ENCODE measurements at regions of chr13 and their contacts with region 1.

Region 1: DNA sequence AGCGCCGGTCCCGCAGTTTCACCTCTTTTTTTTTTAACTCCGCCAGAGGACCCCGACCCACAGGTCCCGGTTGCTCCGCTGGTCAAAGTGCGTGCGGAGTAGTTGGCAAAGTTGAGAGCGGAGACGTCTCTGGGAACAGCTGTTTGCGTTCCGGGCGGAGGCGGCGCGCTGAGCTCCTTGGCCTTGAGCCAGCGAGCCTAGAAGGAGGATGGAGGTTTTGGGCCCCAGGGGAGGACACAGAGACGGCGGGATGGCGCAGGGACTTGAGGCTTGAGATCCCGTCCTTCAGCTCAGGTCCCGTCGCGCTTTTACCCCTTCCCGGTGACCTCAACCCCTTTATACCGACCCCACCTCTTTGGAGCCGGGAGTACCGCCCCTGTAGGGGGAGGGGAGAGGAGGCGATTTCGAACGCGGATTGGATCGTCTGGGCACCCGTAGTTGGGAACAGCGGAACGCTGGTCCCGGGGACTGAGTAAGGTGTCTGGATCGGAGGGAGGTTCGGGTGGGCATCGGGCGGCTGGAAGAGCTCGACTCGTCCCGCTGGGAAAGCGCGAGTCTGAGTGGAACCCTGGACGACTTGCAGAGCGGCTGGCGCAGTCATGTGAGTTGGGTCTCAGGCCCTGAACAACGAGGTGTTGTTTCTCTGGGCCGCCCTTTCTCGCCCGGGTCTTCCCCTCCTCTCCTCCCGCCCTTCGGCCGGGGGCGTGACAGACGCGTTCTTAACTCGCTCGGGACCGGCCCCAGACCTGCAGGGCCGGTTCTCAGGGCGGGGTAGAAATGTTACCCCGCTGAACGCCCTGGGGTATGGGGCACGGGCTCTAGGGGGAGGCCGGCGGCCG is at the start of gene WBP4:
- DNase-seq: peak; percentile 95
- H3K4me3 ChIP-seq: peak within 1 kb of the TSS; percentile 74
- H3K27ac ChIP-seq: peak within 1 kb of the TSS; percentile 83
- H3K4me1 ChIP-seq: peaks cover 48% of the 10 kb centered on the region
- CTCF ChIP-seq: no peak
- total RNA-seq, gene WBP4: 5.9 and 7.9 TPM in 2 replicates

Region 2: DNA sequence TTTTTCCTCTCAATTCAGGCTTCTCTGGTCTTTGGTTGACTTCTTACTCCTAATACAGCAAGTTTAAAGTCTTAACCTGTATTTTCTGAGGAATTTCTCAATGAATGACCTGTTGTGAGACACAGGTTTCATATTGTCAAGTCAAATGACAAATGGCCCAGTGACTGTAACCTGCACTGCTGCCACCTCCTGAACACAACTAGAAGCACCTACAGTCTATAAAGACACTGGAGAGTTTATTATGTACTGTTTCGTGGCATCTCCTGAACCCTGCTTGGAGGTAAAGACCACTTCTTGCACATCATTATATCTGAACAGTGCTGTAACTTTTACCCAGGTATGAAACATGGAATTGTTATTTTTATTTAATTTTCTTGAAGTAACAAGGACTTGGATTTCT is 1049.1 kb before region 1 on chr13:
- CTCF ChIA-PET with region 1: no interaction called
- POLR2A ChIA-PET with region 1: no interaction called
- intact Hi-C with region 1: no loop called
- DNase-seq: peak; percentile 29
- H3K4me3 ChIP-seq: no peak overlapping the region
- H3K27ac ChIP-seq: no peak overlapping the region
- H3K4me1 ChIP-seq: peaks cover 6% of the 10 kb centered on the region
- CTCF ChIP-seq: peak; percentile 53

Region 3: GRCh38 chr13:40692946-40693345 is 368.3 kb before region 1 on chr13:
- CTCF ChIA-PET with region 1: no interaction called
- POLR2A ChIA-PET with region 1: no interaction called
- intact Hi-C with region 1: no loop called
- DNase-seq: no peak
- H3K4me3 ChIP-seq: no peak overlapping the region
- H3K27ac ChIP-seq: peak overlapping the region; percentile 64
- H3K4me1 ChIP-seq: peaks cover 66% of the 10 kb centered on the region
- CTCF ChIP-seq: no peak

Region 4: DNA sequence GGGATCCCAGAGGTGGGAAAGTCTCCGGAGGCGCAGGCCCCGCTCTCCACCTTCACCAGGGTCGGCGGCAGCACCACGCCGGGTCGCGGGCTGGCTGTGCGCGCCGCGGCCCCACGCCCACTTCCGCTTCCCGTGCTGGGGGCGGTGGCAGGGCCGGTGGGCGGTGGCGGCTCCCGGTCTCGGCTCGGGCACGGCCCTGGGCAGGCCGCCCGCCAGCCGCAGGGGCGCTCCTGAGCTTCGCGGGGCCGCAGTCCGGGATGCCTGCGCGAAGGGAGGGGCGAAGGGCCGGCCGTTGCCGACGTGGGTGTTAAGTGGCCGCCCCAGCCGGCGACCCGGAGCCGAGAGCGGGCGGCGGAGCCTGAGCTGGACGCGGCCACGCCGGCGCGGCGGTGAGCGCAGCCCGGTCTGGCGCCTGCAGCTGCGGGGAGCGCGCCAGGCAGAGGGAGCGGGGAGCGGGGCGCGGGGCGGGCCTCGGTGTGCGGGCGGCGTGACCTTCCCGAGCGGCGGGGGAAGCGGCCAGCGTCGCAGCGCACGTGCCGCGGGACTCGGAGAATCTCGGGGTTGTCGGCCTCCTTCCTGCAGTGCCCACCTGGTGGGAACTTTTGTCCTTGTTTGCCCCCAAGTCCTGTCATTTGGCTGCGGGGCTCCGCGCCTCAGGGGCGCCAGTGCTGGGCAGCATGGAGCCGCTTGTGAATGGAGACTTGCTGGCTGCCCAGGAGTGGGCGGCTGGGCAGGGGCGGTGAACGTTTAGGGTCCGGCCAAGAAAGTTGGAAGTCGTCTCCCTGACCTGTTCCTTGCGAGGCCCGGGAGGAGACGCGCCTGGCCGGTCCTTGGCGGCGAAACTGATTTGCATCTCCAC is 271.8 kb before region 1 on chr13 and contains the start of gene SLC25A15:
- CTCF ChIA-PET with region 1: no interaction called
- POLR2A ChIA-PET with region 1: interaction called, 3 read pairs
- intact Hi-C with region 1: loop called (anchors 5 kb)
- DNase-seq: peak; percentile 89
- H3K4me3 ChIP-seq: peak within 1 kb of the TSS; percentile 72
- H3K27ac ChIP-seq: peak within 1 kb of the TSS; percentile 92
- H3K4me1 ChIP-seq: peaks cover 46% of the 10 kb centered on the region
- CTCF ChIP-seq: peak; percentile 47
- total RNA-seq, gene SLC25A15: 61.3 and 71.0 TPM in 2 replicates

Region 5: DNA sequence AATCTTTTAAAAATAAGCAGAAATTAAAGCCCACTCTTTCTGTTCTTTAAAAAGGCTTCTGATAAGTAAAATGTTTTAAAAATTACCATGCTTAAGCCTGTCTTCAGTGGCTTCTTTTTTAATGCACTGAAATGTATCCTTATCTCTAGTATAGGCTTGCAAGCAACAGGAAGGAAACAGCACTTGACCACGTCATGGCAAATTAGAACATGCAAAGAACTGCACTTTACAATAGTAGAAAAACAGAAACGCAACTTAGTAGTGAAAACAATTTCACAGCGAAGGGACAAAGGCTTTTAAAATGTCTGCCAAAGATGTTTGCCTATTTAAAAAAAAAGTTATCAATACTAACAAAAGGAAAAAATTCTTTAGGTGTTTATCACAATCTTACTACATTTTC is 78.5 kb before region 1 on chr13:
- CTCF ChIA-PET with region 1: no interaction called
- POLR2A ChIA-PET with region 1: interaction called, 4 read pairs
- intact Hi-C with region 1: loop called (anchors 2 kb)
- DNase-seq: peak; percentile 85
- H3K4me3 ChIP-seq: peak overlapping the region; percentile 85
- H3K27ac ChIP-seq: peak overlapping the region; percentile 89
- H3K4me1 ChIP-seq: peaks cover 51% of the 10 kb centered on the region
- CTCF ChIP-seq: no peak

Region 6: DNA sequence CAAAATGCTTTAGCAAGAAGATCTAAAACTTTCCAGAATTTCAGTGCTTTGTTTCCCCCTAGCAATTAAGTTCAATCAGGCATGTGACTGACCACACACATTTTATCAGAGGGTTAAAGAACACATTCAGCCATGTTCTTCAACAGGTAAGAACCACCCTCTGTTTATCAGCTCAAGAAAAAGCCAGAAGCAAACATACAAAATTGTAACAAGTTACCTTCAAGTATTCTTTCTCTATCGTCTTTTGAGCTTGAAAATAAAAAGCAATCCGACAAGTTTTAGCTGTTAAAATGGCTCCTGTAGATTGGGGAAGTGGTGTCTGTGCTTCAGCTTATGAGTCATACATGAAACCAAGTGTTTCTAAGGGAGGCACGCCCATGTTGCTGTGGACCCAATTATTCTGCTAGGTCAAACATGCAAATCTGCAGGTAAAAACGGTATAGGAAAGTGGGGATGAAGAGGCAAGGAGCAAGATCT is 42.2 kb before region 1 on chr13 and contains the start of gene ELF1:
- CTCF ChIA-PET with region 1: no interaction called
- POLR2A ChIA-PET with region 1: interaction called, 23 read pairs
- intact Hi-C with region 1: loop called (anchors 1 kb)
- DNase-seq: peak; percentile 95
- H3K4me3 ChIP-seq: peak within 1 kb of the TSS; percentile 84
- H3K27ac ChIP-seq: peak within 1 kb of the TSS; percentile 94
- H3K4me1 ChIP-seq: peaks cover 49% of the 10 kb centered on the region
- CTCF ChIP-seq: no peak
- total RNA-seq, gene ELF1: 106 and 111 TPM in 2 replicates

Region 7: DNA sequence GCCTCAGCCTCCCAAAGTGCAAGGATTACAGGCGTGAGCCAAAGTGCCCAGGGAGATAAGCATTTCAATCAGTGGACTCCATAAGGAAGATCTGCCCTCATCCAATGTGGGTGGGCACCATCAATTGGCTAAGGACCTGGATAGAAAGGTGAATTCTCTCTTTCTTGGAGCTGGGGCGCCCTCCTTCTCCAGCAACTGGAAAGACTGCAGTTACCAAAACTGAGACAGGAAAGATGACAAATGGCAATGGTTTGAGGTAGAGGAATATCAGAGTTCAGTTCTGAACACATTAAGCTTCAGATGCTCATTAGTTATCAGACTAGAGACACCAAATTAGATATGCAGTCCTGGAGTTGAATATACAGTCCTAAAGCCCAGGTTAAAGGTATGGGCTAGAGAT is 31.7 kb before region 1 on chr13:
- CTCF ChIA-PET with region 1: no interaction called
- POLR2A ChIA-PET with region 1: no interaction called
- intact Hi-C with region 1: no loop called
- DNase-seq: no peak
- H3K4me3 ChIP-seq: no peak overlapping the region
- H3K27ac ChIP-seq: no peak overlapping the region
- H3K4me1 ChIP-seq: peaks cover 41% of the 10 kb centered on the region
- CTCF ChIP-seq: peak; percentile 67

Region 8: DNA sequence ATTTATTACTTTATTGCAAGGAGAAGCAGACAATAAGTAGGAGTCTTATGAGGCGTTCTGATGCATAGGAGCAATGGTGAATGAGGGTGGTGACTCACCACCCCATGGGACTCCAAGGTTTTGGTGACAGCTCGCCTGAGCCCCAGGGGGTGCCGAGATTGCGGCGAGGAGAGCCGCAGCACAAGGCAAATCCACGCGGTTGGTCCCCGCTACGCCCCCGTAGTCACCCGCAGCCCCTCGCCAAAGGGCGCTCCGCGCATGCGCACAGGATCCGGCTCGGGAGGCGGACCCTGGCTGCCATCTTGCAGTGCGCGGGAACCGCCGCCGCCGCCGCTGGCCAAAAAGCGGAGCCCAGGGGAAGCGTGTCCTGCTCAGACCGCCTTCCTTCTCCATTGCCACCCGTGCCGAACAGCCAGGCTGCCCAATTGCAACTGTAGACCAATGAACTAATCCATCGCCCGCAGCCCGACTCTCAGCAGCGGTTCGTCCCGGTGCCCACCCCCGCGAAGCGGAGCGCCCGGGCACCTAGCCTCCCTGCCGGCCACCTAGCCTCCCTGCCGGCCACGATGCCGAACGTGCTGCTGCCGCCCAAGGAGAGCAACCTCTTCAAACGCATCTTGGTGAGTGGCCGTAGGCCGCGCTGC is 249.8 kb after region 1 on chr13 and contains the start of gene NAA16:
- CTCF ChIA-PET with region 1: no interaction called
- POLR2A ChIA-PET with region 1: interaction called, 4 read pairs
- intact Hi-C with region 1: loop called (anchors 5 kb)
- DNase-seq: peak; percentile 93
- H3K4me3 ChIP-seq: peak within 1 kb of the TSS; percentile 79
- H3K27ac ChIP-seq: peak within 1 kb of the TSS; percentile 74
- H3K4me1 ChIP-seq: peaks cover 37% of the 10 kb centered on the region
- CTCF ChIP-seq: 0 out of 2 replicates have a peak, but pooled peaks have one; percentile 1
- total RNA-seq, gene NAA16: 22.1 and 22.4 TPM in 2 replicates

Measured in OCI-LY7 (cell line).